Caco-2 (cell line): ENCODE measurements at regions of chr1 and their contacts with region 1.

Region 1: GRCh38 chr1:182604169-182605164 is at the start of gene RGS16:
- DNase-seq: peak; percentile 87 to 89
- H3K4me3 ChIP-seq: peak within 1 kb of the TSS; percentile 65
- H3K4me3 Mint-ChIP-seq: peak within 1 kb of the TSS; percentile 73
- H3K27ac Mint-ChIP-seq: peak within 1 kb of the TSS; percentile 19
- H3K4me1 ChIP-seq: peaks cover 5% of the 10 kb centered on the region; the same call in 1 of the 2 replicates
- H3K4me1 Mint-ChIP-seq: no peaks in the 10 kb centered on the region
- H3K27me3 ChIP-seq: no peaks in the 10 kb centered on the region
- H3K27me3 Mint-ChIP-seq: no peaks in the 10 kb centered on the region
- CTCF ChIP-seq: no peak
- total RNA-seq, gene RGS16: 0.77 and 1.2 TPM in 2 replicates

Region 2: DNA sequence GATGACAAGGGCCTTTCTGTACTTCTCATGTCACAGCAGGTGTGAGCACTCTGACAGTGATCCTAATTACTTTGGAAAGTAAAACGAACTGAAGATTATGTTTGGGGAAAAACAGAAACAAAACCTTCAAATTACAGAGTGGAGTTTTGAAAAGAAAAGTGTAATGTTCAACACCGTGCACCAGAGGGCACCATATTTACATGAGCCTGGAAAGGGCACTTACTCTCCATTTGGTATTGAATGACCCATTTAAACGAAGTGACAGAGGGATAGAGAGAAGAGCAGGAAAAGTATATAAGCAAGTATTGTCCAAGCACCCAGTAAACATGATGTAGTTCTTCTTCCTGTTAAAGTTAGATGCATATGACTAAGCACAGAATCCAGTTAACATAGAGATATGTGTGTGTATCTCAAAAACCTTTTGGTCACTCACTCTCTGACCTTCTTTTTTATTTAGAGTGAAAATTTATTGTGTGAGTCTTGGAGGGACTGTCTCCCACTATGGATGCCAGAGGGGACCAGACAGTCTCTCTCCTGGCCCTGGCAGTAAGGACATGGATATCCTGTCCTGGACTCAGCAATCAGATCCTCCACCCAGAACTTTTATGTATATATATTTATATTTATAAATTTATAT is 158.3 kb before region 1 on chr1:
- CTCF ChIA-PET with region 1: interaction called, 3 read pairs
- POLR2A ChIA-PET with region 1: no interaction called
- intact Hi-C with region 1: loop called (anchors 1 kb)
- DNase-seq: peak in 1 of 2 experiments; percentile 53
- H3K4me3 ChIP-seq: no peak overlapping the region
- H3K4me3 Mint-ChIP-seq: no peak overlapping the region
- H3K27ac Mint-ChIP-seq: no peak overlapping the region
- H3K4me1 ChIP-seq: no peaks in the 10 kb centered on the region
- H3K4me1 Mint-ChIP-seq: no peaks in the 10 kb centered on the region
- H3K27me3 ChIP-seq: no peaks in the 10 kb centered on the region
- H3K27me3 Mint-ChIP-seq: no peaks in the 10 kb centered on the region
- CTCF ChIP-seq: peak; percentile 62 to 77

Region 3: DNA sequence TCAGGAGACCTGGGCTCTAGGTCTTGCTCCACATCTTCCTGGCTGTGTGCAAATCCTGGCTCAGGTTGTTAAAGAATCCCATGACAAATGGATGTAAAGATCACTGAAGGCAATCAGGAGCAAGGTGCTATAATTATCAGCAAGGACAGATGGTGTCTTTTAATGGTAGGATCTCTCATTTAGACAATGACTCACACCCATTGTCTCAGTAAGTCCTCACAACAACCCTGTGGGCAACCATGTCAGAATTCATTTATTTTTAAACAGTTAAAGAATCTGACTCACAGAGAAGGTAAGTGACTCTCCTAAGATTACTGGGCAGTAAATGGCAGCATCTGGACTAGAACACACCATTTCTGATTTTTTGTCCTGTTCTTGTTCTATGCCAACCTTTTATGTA is 48.2 kb before region 1 on chr1:
- CTCF ChIA-PET with region 1: no interaction called
- POLR2A ChIA-PET with region 1: no interaction called
- intact Hi-C with region 1: no loop called
- DNase-seq: no peak
- H3K4me3 ChIP-seq: no peak overlapping the region
- H3K4me3 Mint-ChIP-seq: no peak overlapping the region
- H3K27ac Mint-ChIP-seq: no peak overlapping the region
- H3K4me1 ChIP-seq: no peaks in the 10 kb centered on the region
- H3K4me1 Mint-ChIP-seq: no peaks in the 10 kb centered on the region
- H3K27me3 ChIP-seq: no peaks in the 10 kb centered on the region
- H3K27me3 Mint-ChIP-seq: peaks cover 8% of the 10 kb centered on the region
- CTCF ChIP-seq: no peak

Region 4: GRCh38 chr1:182588500-182589452 is 15.7 kb before region 1 on chr1 and contains the start of gene RNASEL:
- CTCF ChIA-PET with region 1: interaction called, 10 read pairs
- POLR2A ChIA-PET with region 1: no interaction called
- intact Hi-C with region 1: no loop called
- DNase-seq: peak; percentile 63 to 66
- H3K4me3 ChIP-seq: peak within 1 kb of the TSS; percentile 41
- H3K4me3 Mint-ChIP-seq: peak within 1 kb of the TSS; percentile 88
- H3K27ac Mint-ChIP-seq: peak within 1 kb of the TSS; percentile 85
- H3K4me1 ChIP-seq: no peaks in the 10 kb centered on the region
- H3K4me1 Mint-ChIP-seq: no peaks in the 10 kb centered on the region
- H3K27me3 ChIP-seq: no peaks in the 10 kb centered on the region
- H3K27me3 Mint-ChIP-seq: no peaks in the 10 kb centered on the region
- CTCF ChIP-seq: no peak
- total RNA-seq, gene RNASEL: 2.7 and 2.9 TPM in 2 replicates

Region 5: GRCh38 chr1:182629499-182630096 is 25.1 kb after region 1 on chr1:
- CTCF ChIA-PET with region 1: no interaction called
- POLR2A ChIA-PET with region 1: no interaction called
- intact Hi-C with region 1: no loop called
- DNase-seq: no peak
- H3K4me3 ChIP-seq: no peak overlapping the region
- H3K4me3 Mint-ChIP-seq: no peak overlapping the region
- H3K27ac Mint-ChIP-seq: no peak overlapping the region
- H3K4me1 ChIP-seq: peaks cover 16% of the 10 kb centered on the region; the same call in 1 of the 2 replicates
- H3K4me1 Mint-ChIP-seq: peaks cover 47% of the 10 kb centered on the region
- H3K27me3 ChIP-seq: no peaks in the 10 kb centered on the region
- H3K27me3 Mint-ChIP-seq: no peaks in the 10 kb centered on the region
- CTCF ChIP-seq: no peak

Region 6: DNA sequence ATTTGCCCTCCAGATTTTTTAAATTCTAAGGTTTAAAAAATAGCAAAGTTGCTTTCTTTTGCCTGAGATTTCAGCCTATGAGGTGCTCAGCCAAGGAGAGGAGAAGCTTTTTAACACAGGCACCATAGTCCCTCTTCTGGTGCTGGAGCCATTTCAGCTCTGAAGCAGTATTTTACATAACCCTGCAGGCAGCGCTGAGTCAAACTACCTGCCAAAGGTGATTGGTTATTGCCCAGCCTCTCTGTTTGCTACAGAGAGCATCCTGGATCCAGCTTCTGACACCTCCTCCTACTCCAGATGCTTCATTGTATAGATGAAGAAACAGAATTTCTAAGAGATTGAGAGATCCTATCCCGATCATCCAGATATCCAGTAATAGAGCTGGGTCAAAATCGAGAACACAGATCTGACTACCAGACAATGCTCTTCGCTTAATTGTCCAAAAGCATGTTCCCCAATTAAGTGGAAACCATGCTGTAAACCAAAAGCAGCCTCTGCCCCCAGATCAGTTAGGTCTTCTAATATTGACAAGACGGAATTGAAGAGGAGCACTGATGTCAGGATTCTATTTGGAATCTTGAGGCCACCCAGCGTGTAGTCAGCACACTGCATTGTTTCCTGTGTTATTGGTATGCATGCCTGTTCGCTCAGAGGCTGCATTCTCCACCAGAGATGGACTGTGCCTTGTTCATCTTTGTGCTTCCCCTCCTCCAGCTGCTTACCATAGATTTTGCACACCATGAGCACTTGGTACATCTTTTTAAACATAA is 57.8 kb after region 1 on chr1:
- CTCF ChIA-PET with region 1: no interaction called
- POLR2A ChIA-PET with region 1: no interaction called
- intact Hi-C with region 1: no loop called
- DNase-seq: no peak
- H3K4me3 ChIP-seq: no peak overlapping the region
- H3K4me3 Mint-ChIP-seq: no peak overlapping the region
- H3K27ac Mint-ChIP-seq: no peak overlapping the region
- H3K4me1 ChIP-seq: no peaks in the 10 kb centered on the region
- H3K4me1 Mint-ChIP-seq: no peaks in the 10 kb centered on the region
- H3K27me3 ChIP-seq: no peaks in the 10 kb centered on the region
- H3K27me3 Mint-ChIP-seq: no peaks in the 10 kb centered on the region
- CTCF ChIP-seq: no peak

Region 7: DNA sequence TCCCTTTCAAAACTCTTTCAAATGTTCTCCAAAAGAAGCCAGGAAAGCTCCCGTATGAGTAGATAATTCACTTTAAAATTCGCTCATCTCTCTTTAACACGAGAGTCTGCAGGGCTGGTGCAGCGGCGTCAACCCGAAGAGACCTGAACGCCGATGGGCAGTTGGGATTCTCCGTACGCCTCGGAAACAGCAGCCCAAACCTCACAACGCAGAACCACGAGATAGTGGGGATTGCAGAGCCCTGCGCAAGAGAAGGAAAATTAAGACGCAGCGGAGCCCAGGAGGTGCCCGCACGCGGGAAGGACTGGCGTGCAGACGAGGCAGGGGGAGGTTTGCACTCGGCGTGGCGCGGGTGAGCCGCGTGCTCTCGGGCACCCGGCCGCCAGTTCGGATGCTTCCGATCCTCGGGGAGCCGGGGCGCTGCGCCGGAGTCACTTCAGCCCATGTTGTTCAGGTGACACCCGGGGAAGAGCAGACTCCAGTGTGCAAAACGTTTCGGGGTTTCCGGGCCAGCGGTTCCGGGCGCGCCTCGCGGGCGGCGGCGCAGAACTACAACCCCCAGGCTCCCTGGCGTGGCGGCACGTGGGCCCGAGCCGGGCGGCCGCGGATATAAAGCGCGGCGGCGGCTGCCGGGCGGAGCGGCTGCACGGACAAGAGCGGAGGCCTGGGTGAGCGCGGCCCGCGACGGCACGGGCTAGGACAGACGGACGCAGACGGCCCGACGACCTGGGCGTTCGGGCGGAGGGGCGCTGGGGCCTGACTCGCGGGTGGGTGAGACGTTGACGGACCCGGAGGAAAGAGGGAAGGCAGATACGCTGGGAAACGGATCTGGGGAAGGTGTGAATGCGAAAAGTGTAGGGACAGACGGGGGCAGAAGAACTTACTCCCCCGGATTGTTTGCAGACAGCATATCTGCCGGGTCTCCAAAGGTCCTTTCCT is 184.9 kb after region 1 on chr1 and contains the start of gene NPL:
- CTCF ChIA-PET with region 1: interaction called, 265 read pairs
- POLR2A ChIA-PET with region 1: no interaction called
- intact Hi-C with region 1: no loop called
- DNase-seq: peak; percentile 72 to 89
- H3K4me3 ChIP-seq: peak within 1 kb of the TSS; percentile 76
- H3K4me3 Mint-ChIP-seq: peak within 1 kb of the TSS; percentile 97
- H3K27ac Mint-ChIP-seq: peak within 1 kb of the TSS; percentile 63
- H3K4me1 ChIP-seq: peaks cover 9% of the 10 kb centered on the region; the same call in 1 of the 2 replicates
- H3K4me1 Mint-ChIP-seq: peaks cover 6% of the 10 kb centered on the region
- H3K27me3 ChIP-seq: no peaks in the 10 kb centered on the region; the same call in 1 of the 2 replicates
- H3K27me3 Mint-ChIP-seq: peaks cover 7% of the 10 kb centered on the region
- CTCF ChIP-seq: no peak
- total RNA-seq, gene NPL: 3.5 and 4.8 TPM in 2 replicates